CD8-positive, alpha-beta memory T cell (primary cell): ENCODE measurements at regions of chr1 and their contacts with region 1.

Region 1: GRCh38 chr1:161382214-161383019 is 14.7 kb upstream of the CFAP126 start:
- DNase-seq: peak in 2 of 5 donors; percentile 37 to 48
- H3K4me3 ChIP-seq: no peak overlapping the region
- H3K4me3 Mint-ChIP-seq: no peak overlapping the region
- H3K27ac ChIP-seq: no peak overlapping the region
- H3K27ac Mint-ChIP-seq: peak overlapping the region in 2 of 8 donors; percentile 0 to 62
- H3K4me1 ChIP-seq: no peaks in the 10 kb centered on the region
- H3K4me1 Mint-ChIP-seq: peaks cover 4 to 12% (median 8%) of the 10 kb centered on the region in 3 donors
- H3K27me3 ChIP-seq: no peaks in the 10 kb centered on the region
- H3K27me3 Mint-ChIP-seq: peaks cover 0 to 2% of the 10 kb centered on the region in 2 donors

Region 2: DNA sequence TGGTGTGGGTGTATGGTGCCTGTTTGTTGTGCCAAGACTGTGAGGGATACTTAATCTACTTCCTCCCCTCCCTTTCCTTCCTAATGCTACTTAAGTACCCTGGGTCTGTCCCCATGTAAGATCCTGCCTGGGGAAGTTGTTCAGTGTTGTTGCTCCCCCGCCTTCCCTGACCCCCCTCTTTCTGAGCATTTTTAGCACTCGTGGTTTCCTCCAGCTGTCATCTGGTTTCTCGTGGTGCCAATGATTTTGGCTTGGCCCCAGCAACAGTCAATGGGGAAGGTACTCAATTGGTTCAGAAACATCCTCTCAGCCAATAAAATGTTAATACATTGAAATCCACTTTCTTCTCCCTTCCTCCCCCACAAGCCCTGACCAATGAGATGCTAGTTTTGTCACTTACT is 197.1 kb before region 1 on chr1:
- CTCF ChIA-PET with region 1: interaction called, 13 read pairs
- POLR2A ChIA-PET with region 1: interaction called, 3 read pairs
- DNase-seq: peak; percentile 64 to 90 (median 86)
- H3K4me3 ChIP-seq: peak overlapping the region; percentile 19
- H3K4me3 Mint-ChIP-seq: peak overlapping the region; percentile 82 to 94 (median 88)
- H3K27ac ChIP-seq: peak overlapping the region; percentile 28
- H3K27ac Mint-ChIP-seq: peak overlapping the region; percentile 58 to 98 (median 90)
- H3K4me1 ChIP-seq: peaks cover 85% of the 10 kb centered on the region
- H3K4me1 Mint-ChIP-seq: peaks cover 75 to 87% (median 86%) of the 10 kb centered on the region in 3 donors
- H3K27me3 ChIP-seq: no peaks in the 10 kb centered on the region
- H3K27me3 Mint-ChIP-seq: peaks cover 0 to 1% of the 10 kb centered on the region in 2 donors

Region 3: DNA sequence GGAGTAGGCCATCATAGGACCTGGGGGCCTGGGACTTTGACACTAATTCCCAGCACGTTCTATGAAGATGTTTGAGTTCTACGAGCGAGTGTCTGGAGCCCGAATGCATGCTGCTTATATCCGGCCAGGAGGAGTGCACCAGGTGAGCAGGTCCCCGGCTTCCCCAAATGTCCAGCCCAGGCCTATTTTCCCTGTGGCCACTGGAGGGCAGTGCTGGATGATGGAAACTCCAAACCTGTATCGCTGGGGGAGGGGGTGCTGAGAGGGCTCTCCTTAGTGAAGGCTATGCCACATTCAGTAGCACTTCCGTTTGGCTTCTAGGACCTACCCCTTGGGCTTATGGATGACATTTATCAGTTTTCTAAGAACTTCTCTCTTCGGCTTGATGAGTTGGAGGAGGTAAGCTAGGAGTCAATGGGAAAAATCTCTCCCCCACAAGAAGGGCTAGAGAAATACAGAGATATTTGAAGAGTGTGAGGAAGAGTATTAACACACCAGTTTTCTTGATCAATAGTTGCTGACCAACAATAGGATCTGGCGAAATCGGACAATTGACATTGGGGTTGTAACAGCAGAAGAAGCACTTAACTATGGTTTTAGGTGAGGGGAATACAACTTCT is 172.5 kb before region 1 on chr1:
- CTCF ChIA-PET with region 1: interaction called, 10 read pairs
- POLR2A ChIA-PET with region 1: no interaction called
- DNase-seq: peak; percentile 44 to 80 (median 57)
- H3K4me3 ChIP-seq: no peak overlapping the region
- H3K4me3 Mint-ChIP-seq: no peak overlapping the region
- H3K27ac ChIP-seq: no peak overlapping the region
- H3K27ac Mint-ChIP-seq: peak overlapping the region in 7 of 8 donors; percentile 34 to 89 (median 77)
- H3K4me1 ChIP-seq: peaks cover 26% of the 10 kb centered on the region
- H3K4me1 Mint-ChIP-seq: peaks cover 26 to 37% (median 32%) of the 10 kb centered on the region in 3 donors
- H3K27me3 ChIP-seq: no peaks in the 10 kb centered on the region
- H3K27me3 Mint-ChIP-seq: no peaks in the 10 kb centered on the region

Region 4: DNA sequence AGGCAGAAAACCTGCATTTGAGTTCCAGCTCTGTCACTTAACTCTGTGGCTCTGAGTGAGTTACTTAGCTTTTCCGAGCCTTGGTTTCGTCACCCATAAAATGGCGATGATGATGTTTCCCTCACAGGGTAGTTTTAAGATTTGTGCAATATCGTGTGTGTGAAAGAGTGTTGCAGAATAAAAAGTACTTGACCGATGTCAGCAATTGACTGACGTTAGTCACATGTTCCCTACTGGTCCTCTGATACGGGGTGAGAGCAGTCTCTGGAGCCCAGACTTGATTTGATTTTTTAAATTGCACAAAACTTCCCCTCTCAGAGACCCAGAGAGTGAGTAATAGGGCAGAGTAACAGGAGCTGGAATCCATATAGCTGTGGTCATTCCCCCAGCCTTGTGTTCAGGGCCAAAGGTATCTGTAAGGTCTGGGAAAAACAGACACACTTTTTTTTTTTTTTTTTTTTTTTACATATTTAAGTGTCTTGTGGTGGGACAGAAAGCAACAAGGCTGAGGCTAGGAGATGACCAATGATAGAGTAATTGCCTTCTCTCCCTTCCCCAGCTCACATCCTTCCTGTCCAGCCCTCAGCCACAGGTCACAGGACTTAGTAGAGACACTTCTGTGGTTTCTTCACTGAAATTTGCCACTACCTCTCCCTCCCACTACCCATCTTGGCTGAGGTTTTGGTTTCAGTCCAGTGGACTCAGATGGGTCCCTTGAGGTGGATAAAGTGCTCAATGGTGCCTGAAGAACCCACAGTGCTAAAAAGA is 165.3 kb before region 1 on chr1:
- CTCF ChIA-PET with region 1: interaction called, 14 read pairs
- POLR2A ChIA-PET with region 1: no interaction called
- DNase-seq: no peak
- H3K4me3 ChIP-seq: no peak overlapping the region
- H3K4me3 Mint-ChIP-seq: peak overlapping the region in 2 of 7 donors; percentile 35 to 66
- H3K27ac ChIP-seq: no peak overlapping the region
- H3K27ac Mint-ChIP-seq: peak overlapping the region in 5 of 8 donors; percentile 7 to 82 (median 77)
- H3K4me1 ChIP-seq: peaks cover 37% of the 10 kb centered on the region
- H3K4me1 Mint-ChIP-seq: peaks cover 24 to 42% (median 31%) of the 10 kb centered on the region in 3 donors
- H3K27me3 ChIP-seq: no peaks in the 10 kb centered on the region
- H3K27me3 Mint-ChIP-seq: peaks cover 0 to 3% of the 10 kb centered on the region in 2 donors